CD8-positive, alpha-beta T cell (primary cell): ENCODE measurements at regions of chr12 and their contacts with region 1.

Region 1: DNA sequence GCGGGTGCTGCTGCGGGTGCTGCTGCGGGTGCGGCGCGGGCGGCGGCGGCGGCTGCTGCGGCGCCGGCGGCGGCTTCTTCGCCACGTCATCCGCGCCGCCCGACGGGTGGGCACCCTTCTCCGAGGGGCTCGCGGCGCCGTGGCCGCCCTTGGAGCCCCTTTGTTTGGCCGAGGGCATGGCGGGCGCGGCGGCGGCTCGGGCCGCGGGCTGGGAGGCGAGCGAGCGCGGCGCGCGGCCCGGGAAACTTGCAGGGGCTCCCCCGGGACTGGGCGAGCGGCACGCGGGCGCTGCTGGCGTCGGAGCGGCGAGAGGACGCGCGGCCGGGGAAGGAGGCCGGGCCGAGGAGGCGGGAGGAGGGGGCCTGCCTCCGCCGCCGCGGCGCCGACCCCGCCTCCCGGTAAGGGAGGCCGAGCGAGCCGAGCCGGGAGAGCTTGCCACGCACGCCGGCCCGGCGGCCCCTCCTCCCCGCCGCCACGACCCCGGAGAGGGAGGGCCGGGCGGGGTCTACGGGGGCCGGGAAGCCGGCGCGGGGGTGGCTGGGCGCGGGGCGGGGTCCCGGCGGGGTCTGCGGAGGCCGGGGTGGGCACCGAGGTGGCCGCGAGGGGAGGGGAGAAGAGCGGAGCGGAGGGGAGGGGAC is at the start of gene CKAP4:
- DNase-seq: peak; percentile 10 to 83 (median 58)
- ATAC-seq: peak; percentile 55
- H3K4me3 ChIP-seq: peak within 1 kb of the TSS; percentile 66 to 84
- H3K4me3 Mint-ChIP-seq: peak within 1 kb of the TSS; percentile 86
- H3K27ac ChIP-seq: peak within 1 kb of the TSS; percentile 72 to 73
- H3K27ac Mint-ChIP-seq: peak within 1 kb of the TSS; percentile 95
- H3K4me1 ChIP-seq: peaks cover 32% of the 10 kb centered on the region
- H3K4me1 Mint-ChIP-seq: peaks cover 35% of the 10 kb centered on the region
- H3K27me3 ChIP-seq: no peaks in the 10 kb centered on the region
- H3K27me3 Mint-ChIP-seq: no peaks in the 10 kb centered on the region
- CTCF ChIP-seq: no peak
- total RNA-seq, gene CKAP4: 19.3 to 19.7 TPM

Region 2: DNA sequence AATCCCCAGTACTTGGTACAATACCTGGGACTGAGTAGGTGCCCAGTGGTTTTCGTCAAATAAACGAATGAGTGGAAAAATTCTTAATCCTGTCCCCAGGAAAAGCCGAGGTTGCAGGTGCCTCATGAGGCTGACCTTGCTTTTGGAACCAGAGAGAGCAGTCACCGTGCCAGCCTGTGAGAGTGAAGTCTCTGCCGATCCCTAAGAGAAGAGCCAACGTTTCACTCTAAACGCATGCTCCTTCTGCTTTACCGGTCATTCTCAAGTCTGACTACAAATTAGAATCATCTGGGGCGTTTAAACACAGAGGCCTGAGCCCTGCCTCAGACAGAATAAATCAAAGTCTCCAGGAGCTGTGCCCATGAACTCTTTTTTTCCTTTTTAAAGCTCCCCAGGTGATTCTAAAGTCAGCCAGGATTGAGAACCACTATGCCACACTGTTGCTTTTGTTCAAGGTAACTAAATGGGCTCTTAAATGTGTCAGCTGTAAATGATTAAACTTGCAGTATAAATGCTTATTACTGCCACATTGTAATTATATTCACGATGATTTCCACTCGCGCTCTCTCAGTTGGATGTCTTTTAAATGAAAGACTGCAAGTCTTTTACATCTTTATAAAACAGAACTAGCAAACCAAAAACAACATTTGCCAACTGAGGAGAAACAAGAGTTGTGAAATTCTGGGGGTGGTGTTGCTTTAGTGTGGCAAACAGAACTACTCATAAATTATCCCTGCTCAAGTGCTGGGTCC is 81.6 kb after region 1 on chr12:
- CTCF ChIA-PET with region 1: no interaction called
- POLR2A ChIA-PET with region 1: no interaction called
- intact Hi-C with region 1: no loop called
- DNase-seq: no peak
- ATAC-seq: no peak
- H3K4me3 ChIP-seq: no peak overlapping the region
- H3K4me3 Mint-ChIP-seq: no peak overlapping the region
- H3K27ac ChIP-seq: no peak overlapping the region
- H3K27ac Mint-ChIP-seq: no peak overlapping the region
- H3K4me1 ChIP-seq: no peaks in the 10 kb centered on the region
- H3K4me1 Mint-ChIP-seq: peaks cover 14% of the 10 kb centered on the region
- H3K27me3 ChIP-seq: no peaks in the 10 kb centered on the region
- H3K27me3 Mint-ChIP-seq: no peaks in the 10 kb centered on the region
- CTCF ChIP-seq: no peak

Region 3: GRCh38 chr12:106955377-106956047 is 707.7 kb after region 1 on chr12 and contains the start of gene TMEM263:
- CTCF ChIA-PET with region 1: interaction called, 3 read pairs
- POLR2A ChIA-PET with region 1: no interaction called
- intact Hi-C with region 1: loop called in 1 of 2 experiments (anchors 10 kb)
- DNase-seq: peak; percentile 83 to 98 (median 93)
- ATAC-seq: peak; percentile 81
- H3K4me3 ChIP-seq: peak within 1 kb of the TSS; percentile 87 to 93
- H3K4me3 Mint-ChIP-seq: peak within 1 kb of the TSS; percentile 97
- H3K27ac ChIP-seq: peak within 1 kb of the TSS; percentile 76 to 90
- H3K27ac Mint-ChIP-seq: peak within 1 kb of the TSS; percentile 96
- H3K4me1 ChIP-seq: peaks cover 18% of the 10 kb centered on the region
- H3K4me1 Mint-ChIP-seq: peaks cover 41% of the 10 kb centered on the region
- H3K27me3 ChIP-seq: no peaks in the 10 kb centered on the region
- H3K27me3 Mint-ChIP-seq: no peaks in the 10 kb centered on the region
- CTCF ChIP-seq: no peak
- total RNA-seq, gene TMEM263: 34.3 to 35.3 TPM